K562 (cell line): ENCODE measurements at regions of chr14 and their contacts with region 1.

Region 1: DNA sequence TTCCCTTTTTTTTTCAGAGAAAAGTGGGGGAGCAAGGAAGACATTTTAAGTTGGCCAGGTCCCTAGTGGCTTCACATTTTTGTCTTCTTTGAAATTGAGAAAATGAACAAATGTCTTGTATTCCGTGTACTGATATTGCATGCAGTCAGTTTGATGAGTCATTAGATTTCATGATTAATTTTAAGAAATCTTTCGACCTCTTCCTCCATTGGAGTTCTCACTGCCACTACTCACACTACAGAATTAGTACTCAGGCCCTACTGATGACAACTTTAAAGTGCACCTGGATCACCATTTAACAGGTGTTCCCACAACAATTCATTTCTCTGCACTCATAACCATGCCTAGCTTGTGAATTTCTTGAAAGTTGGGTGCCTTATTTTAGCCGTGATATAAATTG is 50.5 kb downstream of the SAMD4A start:
- DNase-seq: no peak
- ATAC-seq: no peak
- H3K4me3 ChIP-seq: no peak overlapping the region
- H3K27ac ChIP-seq: no peak overlapping the region
- H3K4me1 ChIP-seq: peaks cover 0 to 9% of the 10 kb centered on the region in 2 experiments; a peak in 3 of 5 replicates
- H3K27me3 ChIP-seq: no peaks in the 10 kb centered on the region
- CTCF ChIP-seq: no peak
- EP300 ChIP-seq: no peak
- POLR2A ChIP-seq: no peak
- RAD21 ChIP-seq: no peak

Region 2: GRCh38 chr14:54555651-54556050 is 61.8 kb before region 1 on chr14:
- CTCF ChIA-PET with region 1: no interaction called
- POLR2A ChIA-PET with region 1: no interaction called
- in situ Hi-C with region 1: no loop called
- intact Hi-C with region 1: no loop called
- DNase-seq: peak in 1 of 4 experiments; percentile 18
- ATAC-seq: peak; percentile 86
- H3K4me3 ChIP-seq: no peak overlapping the region
- H3K27ac ChIP-seq: no peak overlapping the region
- H3K4me1 ChIP-seq: no peaks in the 10 kb centered on the region; a peak in 1 of 5 replicates
- H3K27me3 ChIP-seq: no peaks in the 10 kb centered on the region
- CTCF ChIP-seq: peak; percentile 24 to 49 (median 29); a peak in 3 of 6 replicates
- EP300 ChIP-seq: no peak
- POLR2A ChIP-seq: no peak
- RAD21 ChIP-seq: peak; percentile 10 to 64; a peak in 2 of 4 replicates

Region 3: DNA sequence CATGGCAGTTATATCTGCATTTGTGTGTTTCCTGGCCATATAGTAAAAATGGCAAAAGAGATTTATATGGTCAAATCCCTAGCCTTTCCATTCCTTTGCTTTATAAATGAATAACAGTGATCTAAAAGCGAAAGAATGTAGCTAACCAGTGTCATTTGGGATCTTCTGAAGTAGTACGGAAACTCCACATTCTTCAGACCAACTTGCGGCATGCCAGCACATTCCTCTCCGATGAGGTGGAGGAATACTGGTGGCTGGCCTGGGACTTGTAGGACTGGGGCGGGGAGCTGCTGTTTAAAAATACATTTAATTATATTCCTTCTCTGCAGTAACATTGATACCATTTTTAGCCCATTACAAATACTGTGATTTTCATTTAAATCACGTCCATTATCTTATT is 34.7 kb after region 1 on chr14:
- CTCF ChIA-PET with region 1: no interaction called
- POLR2A ChIA-PET with region 1: no interaction called
- in situ Hi-C with region 1: loop called (anchors 5 kb)
- intact Hi-C with region 1: no loop called
- DNase-seq: no peak
- ATAC-seq: no peak
- H3K4me3 ChIP-seq: no peak overlapping the region
- H3K27ac ChIP-seq: no peak overlapping the region
- H3K4me1 ChIP-seq: no peaks in the 10 kb centered on the region; a peak in 1 of 5 replicates
- H3K27me3 ChIP-seq: no peaks in the 10 kb centered on the region
- CTCF ChIP-seq: no peak
- EP300 ChIP-seq: no peak
- POLR2A ChIP-seq: no peak
- RAD21 ChIP-seq: no peak